ENCODE measurements at regions of chr7 and their contacts with region 1.

Region 1: GRCh38 chr7:3859436-3859835 is 558.4 kb downstream of the SDK1 start:
- DNase-seq: no peak
- ATAC-seq: no peak
- H3K4me3 ChIP-seq: no peak overlapping the region
- H3K27ac ChIP-seq: no peak overlapping the region
- H3K4me1 ChIP-seq: no peaks in the 10 kb centered on the region
- H3K27me3 ChIP-seq: no peaks in the 10 kb centered on the region
- CTCF ChIP-seq: no peak
- EP300 ChIP-seq: no peak
- POLR2A ChIP-seq: no peak
- RAD21 ChIP-seq: no peak

Region 2: DNA sequence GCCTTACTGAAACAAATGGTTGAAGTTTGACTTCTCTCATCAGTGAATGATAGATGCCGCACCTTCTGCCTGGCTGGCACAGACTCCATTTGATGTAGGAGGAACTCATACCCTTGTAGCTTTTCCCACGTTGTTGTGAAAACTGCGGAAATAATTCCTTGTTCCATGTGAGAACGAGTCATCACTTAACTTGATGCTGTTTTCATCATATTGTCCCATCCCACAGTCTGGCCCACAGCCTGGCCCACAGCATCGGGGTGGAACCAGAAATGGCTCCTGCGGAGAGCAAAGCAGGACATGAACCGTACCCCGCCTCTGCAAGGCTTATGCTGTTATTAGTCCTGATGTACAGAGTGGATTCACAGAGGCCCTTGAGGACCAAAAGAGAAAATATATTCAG is 28.7 kb after region 1 on chr7:
- CTCF ChIA-PET with region 1: no interaction called
- POLR2A ChIA-PET with region 1: no interaction called
- in situ Hi-C with region 1: no loop called
- intact Hi-C with region 1: loop called (anchors 1 kb)
- DNase-seq: no peak
- ATAC-seq: no peak
- H3K4me3 ChIP-seq: no peak overlapping the region
- H3K27ac ChIP-seq: no peak overlapping the region
- H3K4me1 ChIP-seq: peaks cover 8% of the 10 kb centered on the region
- H3K27me3 ChIP-seq: no peaks in the 10 kb centered on the region
- CTCF ChIP-seq: no peak
- EP300 ChIP-seq: no peak
- POLR2A ChIP-seq: no peak
- RAD21 ChIP-seq: no peak

Measured in HepG2 (cell line).